H1 (cell line): ENCODE measurements at regions of chr19 and their contacts with region 1.

Region 1: GRCh38 chr19:47296036-47296435 is 13.6 kb upstream of the C5AR1 start:
- DNase-seq: peak; percentile 67 to 88
- H3K4me3 ChIP-seq: no peak overlapping the region
- H3K27ac ChIP-seq: no peak overlapping the region
- H3K4me1 ChIP-seq: 0 out of 7 replicates have a peak, but pooled peaks cover 0 to 2% (median 0%) of the 10 kb centered on the region in 4 experiments
- H3K27me3 ChIP-seq: no peaks in the 10 kb centered on the region
- CTCF ChIP-seq: peak; percentile 68 to 95 (median 87)
- EP300 ChIP-seq: no peak
- POLR2A ChIP-seq: no peak
- RAD21 ChIP-seq: peak; percentile 94 to 95

Region 2: DNA sequence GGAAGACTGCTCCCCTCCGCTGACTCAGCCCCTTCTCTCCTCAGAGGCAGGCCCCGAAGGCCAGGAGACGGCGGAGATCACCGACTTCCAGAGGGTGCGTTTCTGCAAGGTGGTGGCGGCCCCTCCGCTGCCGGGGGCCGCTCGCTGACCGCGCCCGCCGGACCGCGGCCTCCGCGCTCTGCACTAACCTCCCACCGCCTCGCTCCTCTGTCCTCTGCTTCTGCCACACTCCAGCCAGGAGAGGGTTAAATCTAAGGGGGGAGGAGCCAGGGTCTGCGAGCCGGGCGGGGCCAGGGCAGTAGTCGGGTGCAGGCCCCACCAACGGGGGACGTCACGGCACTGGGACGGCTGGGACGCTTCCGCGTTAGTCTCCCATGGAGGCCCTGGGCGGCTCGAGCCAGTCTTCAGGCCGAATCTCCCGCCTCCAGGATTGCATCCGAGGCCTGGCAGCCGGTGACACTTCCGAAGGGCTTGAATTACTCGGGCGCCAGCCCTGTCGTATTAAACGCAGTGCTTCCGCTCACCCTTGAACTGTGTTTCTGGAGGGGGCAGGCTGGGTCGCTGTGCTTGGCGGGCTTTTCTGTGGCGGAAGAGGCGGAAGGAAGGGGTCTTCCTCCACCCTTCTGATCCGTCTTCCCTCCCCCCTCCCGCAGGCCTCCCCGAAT is 22.6 kb before region 1 on chr19:
- CTCF ChIA-PET with region 1: interaction called, 6 read pairs
- POLR2A ChIA-PET with region 1: interaction called, 19 read pairs
- DNase-seq: peak; percentile 79 to 92
- H3K4me3 ChIP-seq: peak overlapping the region; percentile 70 to 84 (median 78)
- H3K27ac ChIP-seq: peak overlapping the region; percentile 92
- H3K4me1 ChIP-seq: peaks cover 0 to 19% (median 8%) of the 10 kb centered on the region in 4 experiments; a peak in 6 of 7 replicates
- H3K27me3 ChIP-seq: peaks cover 0 to 10% (median 6%) of the 10 kb centered on the region in 4 experiments; a peak in 5 of 7 replicates
- CTCF ChIP-seq: no peak
- EP300 ChIP-seq: no peak
- POLR2A ChIP-seq: peak; percentile 71 to 78; a peak in 2 of 3 replicates
- RAD21 ChIP-seq: no peak

Region 3: GRCh38 chr19:47284324-47284899 is 11.6 kb before region 1 on chr19:
- CTCF ChIA-PET with region 1: interaction called, 90 read pairs
- POLR2A ChIA-PET with region 1: interaction called, 5 read pairs
- DNase-seq: peak in 1 of 2 experiments; percentile 60
- H3K4me3 ChIP-seq: no peak overlapping the region
- H3K27ac ChIP-seq: no peak overlapping the region
- H3K4me1 ChIP-seq: no peaks in the 10 kb centered on the region; a peak in 2 of 7 replicates
- H3K27me3 ChIP-seq: no peaks in the 10 kb centered on the region; a peak in 1 of 7 replicates
- CTCF ChIP-seq: peak in 2 of 3 experiments; percentile 64 to 74; a peak in 3 of 4 replicates
- EP300 ChIP-seq: no peak
- POLR2A ChIP-seq: no peak
- RAD21 ChIP-seq: peak; percentile 58 to 65

Region 4: DNA sequence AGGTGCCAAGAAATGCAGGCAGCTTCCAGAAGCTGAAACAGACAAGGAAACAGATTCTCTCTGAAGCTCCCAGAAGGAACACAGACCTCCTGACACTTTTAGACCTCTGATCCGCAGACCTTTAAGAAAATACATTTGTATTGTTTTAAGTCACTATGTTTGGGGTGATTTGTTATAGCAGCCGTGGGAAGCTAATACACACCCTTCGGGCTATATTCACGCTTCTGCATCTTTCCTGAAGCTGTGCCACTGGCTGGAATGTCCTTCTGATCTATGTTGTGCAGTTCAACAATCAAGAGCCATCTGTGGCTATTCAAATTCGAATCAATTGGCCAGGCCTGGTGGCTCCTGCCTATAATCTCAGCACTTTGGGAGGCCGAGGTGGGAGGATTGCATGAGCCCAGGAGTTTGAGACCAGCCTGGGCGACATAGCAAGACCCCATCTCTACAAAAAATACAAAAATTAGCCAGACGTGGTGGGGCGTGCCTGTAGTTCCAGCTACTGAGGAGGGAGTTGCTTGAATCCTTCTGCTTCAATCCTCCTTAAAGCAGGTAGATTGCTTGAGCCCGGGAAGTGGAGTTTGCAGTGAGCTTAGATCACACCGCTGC is 47.3 kb after region 1 on chr19:
- CTCF ChIA-PET with region 1: interaction called, 12 read pairs
- POLR2A ChIA-PET with region 1: interaction called, 3 read pairs
- DNase-seq: no peak
- H3K4me3 ChIP-seq: no peak overlapping the region
- H3K27ac ChIP-seq: no peak overlapping the region
- H3K4me1 ChIP-seq: no peaks in the 10 kb centered on the region
- H3K27me3 ChIP-seq: peaks cover 0 to 2% (median 0%) of the 10 kb centered on the region in 4 experiments; a peak in 2 of 7 replicates
- CTCF ChIP-seq: no peak
- EP300 ChIP-seq: no peak
- POLR2A ChIP-seq: no peak
- RAD21 ChIP-seq: no peak

Region 5: DNA sequence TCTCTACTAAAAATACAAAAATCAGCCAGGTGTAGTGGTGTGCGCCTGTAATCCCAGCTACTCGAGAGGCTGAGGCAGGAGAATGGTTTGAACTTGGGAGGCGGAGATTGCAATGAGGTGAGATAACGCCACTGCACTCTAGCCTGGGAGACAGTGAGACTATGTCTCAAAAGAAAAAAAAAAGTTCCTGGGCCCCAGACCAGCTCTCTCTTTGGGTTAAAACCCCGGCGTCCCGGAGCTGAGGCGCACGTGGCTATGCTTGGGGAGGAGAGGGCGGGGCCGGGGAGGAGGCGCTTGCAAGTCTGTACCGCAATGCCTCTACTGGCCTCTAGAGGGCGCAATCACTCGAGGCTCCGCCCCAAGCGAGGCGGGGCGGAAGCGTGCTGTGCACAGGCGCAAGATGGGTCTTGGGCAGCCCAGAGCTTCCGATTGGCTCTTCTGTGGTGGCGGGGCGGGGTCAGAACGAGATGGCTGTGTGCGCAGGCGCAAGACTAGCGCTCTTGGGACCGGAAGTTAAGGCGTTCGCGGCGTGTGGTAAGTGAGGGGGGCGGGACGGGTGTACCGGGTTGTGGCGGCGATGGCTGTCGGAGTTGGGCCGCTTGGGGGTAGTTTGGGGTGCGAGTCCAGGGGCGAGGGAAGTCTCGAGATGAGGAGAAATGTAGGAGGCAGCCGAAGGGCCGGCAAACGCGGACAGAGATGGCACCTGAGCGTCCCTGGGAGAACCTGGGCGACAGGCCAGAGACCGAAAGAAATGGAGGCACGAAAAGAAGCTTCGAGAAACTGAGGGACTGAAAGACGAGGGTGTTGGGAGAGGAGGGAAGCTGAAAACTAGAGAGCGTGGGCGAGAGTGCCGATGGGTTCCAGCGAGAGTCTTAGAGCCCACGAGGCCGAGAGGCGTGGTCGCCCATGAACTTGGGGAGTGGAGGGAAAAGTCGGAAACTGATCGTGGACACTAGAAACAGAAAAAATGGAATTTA is 53.1 kb after region 1 on chr19 and contains the start of gene DHX34:
- CTCF ChIA-PET with region 1: interaction called, 12 read pairs
- POLR2A ChIA-PET with region 1: interaction called, 8 read pairs
- DNase-seq: peak; percentile 99 to 100
- H3K4me3 ChIP-seq: peak within 1 kb of the TSS; percentile 71 to 95 (median 86)
- H3K27ac ChIP-seq: 0 out of 2 replicates have a peak within 1 kb of the TSS, but pooled peaks have one; percentile 25
- H3K4me1 ChIP-seq: peaks cover 0 to 7% (median 2%) of the 10 kb centered on the region in 4 experiments; a peak in 4 of 7 replicates
- H3K27me3 ChIP-seq: peaks cover 0 to 3% (median 0%) of the 10 kb centered on the region in 4 experiments; a peak in 2 of 7 replicates
- CTCF ChIP-seq: peak; percentile 85 to 99 (median 92)
- EP300 ChIP-seq: 0 out of 3 replicates have a peak, but pooled peaks of 1 of the 2 experiments have one; percentile 13
- POLR2A ChIP-seq: peak in 1 of 2 experiments; percentile 69; a peak in 2 of 3 replicates
- RAD21 ChIP-seq: peak in 1 of 2 experiments; percentile 37; a peak in 2 of 4 replicates
- total RNA-seq, gene DHX34: 24.1 and 24.3 TPM in 2 replicates

Region 6: DNA sequence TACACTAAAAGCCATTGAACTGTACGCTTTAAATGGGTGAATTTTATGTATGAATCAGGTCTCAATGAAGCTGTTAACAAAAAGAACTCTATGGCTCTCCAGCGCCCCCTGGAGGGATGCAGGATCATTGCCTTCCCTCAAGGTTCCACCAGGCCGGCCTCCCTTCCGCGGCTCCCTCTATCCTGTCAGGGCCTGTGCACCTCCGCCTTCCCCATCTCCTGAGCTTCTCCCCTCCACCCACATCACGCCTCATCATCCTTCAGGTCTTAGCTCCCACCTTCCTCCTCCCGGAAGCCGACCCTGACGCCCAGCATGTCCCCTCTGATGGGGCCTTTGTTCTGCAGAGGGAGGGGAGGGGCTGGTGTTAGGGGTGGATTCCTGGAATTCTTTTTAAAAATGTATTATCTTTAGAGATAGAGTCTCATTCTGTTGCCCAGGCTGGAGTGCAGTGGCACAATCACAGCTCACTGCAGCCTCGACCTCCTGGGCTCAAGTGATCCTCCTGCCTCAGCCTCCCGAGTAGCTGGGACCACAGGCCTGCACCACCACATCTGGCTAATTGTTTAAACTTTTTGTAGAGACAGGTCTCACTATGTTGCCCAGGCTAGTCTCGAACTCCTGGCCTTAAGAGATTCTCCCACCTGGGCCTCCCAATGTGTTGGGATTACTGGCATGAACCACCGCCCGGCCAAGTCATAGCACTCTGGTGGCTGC is 95.6 kb after region 1 on chr19:
- CTCF ChIA-PET with region 1: interaction called, 20 read pairs
- POLR2A ChIA-PET with region 1: interaction called, 5 read pairs
- DNase-seq: peak; percentile 89 to 97
- H3K4me3 ChIP-seq: no peak overlapping the region
- H3K27ac ChIP-seq: no peak overlapping the region
- H3K4me1 ChIP-seq: peaks cover 0 to 3% (median 0%) of the 10 kb centered on the region in 4 experiments; a peak in 4 of 7 replicates
- H3K27me3 ChIP-seq: no peaks in the 10 kb centered on the region
- CTCF ChIP-seq: peak; percentile 71 to 92 (median 76)
- EP300 ChIP-seq: peak in 1 of 2 experiments; percentile 90; a peak in 2 of 3 replicates
- POLR2A ChIP-seq: peak in 1 of 2 experiments; percentile 54; a peak in 2 of 3 replicates
- RAD21 ChIP-seq: peak; percentile 65 to 68

Region 7: GRCh38 chr19:47414469-47414868 is 118.4 kb after region 1 on chr19:
- CTCF ChIA-PET with region 1: interaction called, 13 read pairs
- POLR2A ChIA-PET with region 1: interaction called, 4 read pairs
- DNase-seq: peak in 1 of 2 experiments; percentile 70
- H3K4me3 ChIP-seq: no peak overlapping the region
- H3K27ac ChIP-seq: no peak overlapping the region
- H3K4me1 ChIP-seq: peaks cover 6 to 18% (median 10%) of the 10 kb centered on the region in 4 experiments
- H3K27me3 ChIP-seq: peaks cover 12 to 35% (median 32%) of the 10 kb centered on the region in 4 experiments
- CTCF ChIP-seq: peak; percentile 70 to 86 (median 79)
- EP300 ChIP-seq: no peak
- POLR2A ChIP-seq: no peak
- RAD21 ChIP-seq: peak; percentile 78 to 85